MCF 10A (cell line): ENCODE measurements at regions of chr6 and their contacts with region 1.

Region 1: DNA sequence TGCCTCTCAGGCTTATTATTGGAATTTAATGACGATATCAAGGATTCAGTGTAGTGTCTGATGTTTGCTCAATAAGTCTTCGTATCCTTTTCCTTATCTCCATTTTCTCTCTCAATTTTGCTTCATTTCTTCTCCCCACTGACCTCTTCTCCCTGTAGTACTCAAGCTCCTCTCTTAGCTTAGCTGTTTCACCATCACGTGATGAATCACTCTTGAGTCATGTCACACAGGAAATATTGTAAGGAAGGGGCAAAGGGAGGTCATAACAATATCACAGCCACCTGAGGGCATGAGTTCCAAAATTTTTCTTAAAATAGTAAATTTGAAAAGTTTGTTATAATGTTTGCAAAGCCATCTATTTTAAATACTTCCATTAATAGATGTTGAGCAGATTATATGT is 392.2 kb upstream of the MARCKS start:
- DNase-seq: peak; percentile 89
- H3K4me3 Mint-ChIP-seq: no peak overlapping the region
- H3K27ac Mint-ChIP-seq: peak overlapping the region; percentile 3
- H3K4me1 Mint-ChIP-seq: peaks cover 13% of the 10 kb centered on the region
- H3K27me3 Mint-ChIP-seq: no peaks in the 10 kb centered on the region
- CTCF ChIP-seq: no peak

Region 2: GRCh38 chr6:113447088-113447831 is 17.7 kb before region 1 on chr6:
- CTCF ChIA-PET with region 1: interaction called, 4 read pairs
- POLR2A ChIA-PET with region 1: interaction called, 14 read pairs
- intact Hi-C with region 1: no loop called
- DNase-seq: peak; percentile 88
- H3K4me3 Mint-ChIP-seq: no peak overlapping the region
- H3K27ac Mint-ChIP-seq: peak overlapping the region; percentile 88
- H3K4me1 Mint-ChIP-seq: peaks cover 41% of the 10 kb centered on the region
- H3K27me3 Mint-ChIP-seq: no peaks in the 10 kb centered on the region
- CTCF ChIP-seq: no peak